ENCODE measurements at regions of chr18 and their contacts with region 1.

Region 1: DNA sequence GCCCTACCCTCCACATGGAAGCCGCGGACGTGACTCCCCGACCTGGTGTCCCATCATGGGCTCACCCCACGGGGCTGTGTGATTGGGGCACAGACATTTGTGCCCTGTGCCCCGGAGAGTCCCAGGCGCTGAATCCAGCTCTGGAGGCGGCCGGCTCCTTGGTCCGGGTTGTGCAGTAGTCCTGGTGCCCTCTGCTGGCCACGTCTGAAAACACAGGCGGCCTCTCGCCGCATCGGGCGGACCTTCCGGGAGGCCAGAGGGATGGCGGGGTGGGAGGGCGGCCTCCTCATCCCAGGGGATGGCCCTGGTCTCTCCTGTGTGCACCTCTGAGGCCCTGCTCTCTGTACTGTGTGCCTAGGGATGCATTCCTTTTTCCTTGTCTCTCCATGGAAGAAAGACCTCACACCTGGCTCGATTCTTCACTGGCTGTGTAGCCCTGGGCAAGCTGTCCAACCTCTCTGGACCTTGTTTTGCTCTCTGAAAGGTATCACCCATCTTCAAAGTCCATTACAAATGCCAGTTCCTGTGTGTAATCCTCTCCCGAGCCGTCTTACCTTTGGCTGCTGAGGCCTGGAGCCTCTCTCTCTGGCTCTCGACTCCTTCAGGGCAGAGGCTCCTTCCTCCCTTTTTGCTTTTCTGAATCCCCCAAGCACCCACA is 27.6 kb downstream of the CELF4 start:
- DNase-seq: peak; percentile 63
- H3K4me3 Mint-ChIP-seq: no peak overlapping the region
- H3K27ac Mint-ChIP-seq: no peak overlapping the region
- H3K4me1 Mint-ChIP-seq: peaks cover 11% of the 10 kb centered on the region
- H3K27me3 Mint-ChIP-seq: peaks cover 72% of the 10 kb centered on the region
- CTCF ChIP-seq: peak; percentile 92

Region 2: GRCh38 chr18:36942264-36942663 is 595.7 kb before region 1 on chr18:
- CTCF ChIA-PET with region 1: interaction called, 4 read pairs
- POLR2A ChIA-PET with region 1: no interaction called
- intact Hi-C with region 1: loop called (anchors 1 kb)
- DNase-seq: peak; percentile 54
- H3K4me3 Mint-ChIP-seq: no peak overlapping the region
- H3K27ac Mint-ChIP-seq: no peak overlapping the region
- H3K4me1 Mint-ChIP-seq: no peaks in the 10 kb centered on the region
- H3K27me3 Mint-ChIP-seq: no peaks in the 10 kb centered on the region
- CTCF ChIP-seq: peak; percentile 83

Region 3: DNA sequence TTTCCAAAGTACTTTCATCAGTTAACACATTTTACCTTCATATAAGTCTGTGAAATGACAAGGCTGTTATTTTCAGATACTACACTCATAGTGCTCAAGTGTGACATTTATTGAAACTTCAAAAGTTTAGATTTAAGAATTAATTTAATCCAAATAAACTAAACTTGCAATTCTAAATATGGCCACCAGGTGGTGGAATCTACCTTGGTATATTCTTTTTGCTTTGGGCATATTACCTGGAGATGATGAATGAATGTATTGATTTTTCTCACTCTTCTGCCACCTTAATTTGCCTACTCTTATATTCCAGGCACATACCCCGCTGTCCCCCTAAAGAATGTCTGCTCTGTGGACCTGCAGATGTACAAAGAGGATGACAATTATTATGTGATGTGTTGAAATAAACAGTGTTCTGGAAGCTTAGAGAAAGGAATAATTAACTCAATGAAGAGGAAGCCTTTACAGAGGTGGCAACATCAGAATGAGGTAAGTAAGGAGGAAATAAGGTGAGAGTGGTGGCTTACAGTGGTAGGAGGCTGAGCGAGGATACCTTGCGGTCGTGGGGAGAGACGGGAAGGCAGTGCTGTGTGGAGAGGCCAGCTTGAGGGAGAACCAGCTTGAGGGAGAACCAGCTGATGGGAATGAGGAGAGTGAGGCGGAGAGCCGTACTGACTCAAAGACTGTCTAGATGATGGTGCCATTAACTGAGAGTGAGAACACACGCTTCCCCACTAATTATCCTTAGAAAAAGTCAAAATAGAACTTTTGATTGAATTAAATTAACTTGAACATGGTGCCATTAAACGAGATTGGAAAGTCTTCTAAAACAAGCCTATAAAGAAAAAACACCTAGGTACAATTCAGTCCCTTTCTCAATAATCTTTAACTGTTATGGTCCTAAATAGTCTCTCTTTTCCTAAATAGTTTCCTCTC is 151.9 kb before region 1 on chr18:
- CTCF ChIA-PET with region 1: interaction called, 76 read pairs
- POLR2A ChIA-PET with region 1: no interaction called
- intact Hi-C with region 1: loop called (anchors 1 kb)
- DNase-seq: peak; percentile 54
- H3K4me3 Mint-ChIP-seq: no peak overlapping the region
- H3K27ac Mint-ChIP-seq: no peak overlapping the region
- H3K4me1 Mint-ChIP-seq: no peaks in the 10 kb centered on the region
- H3K27me3 Mint-ChIP-seq: peaks cover 15% of the 10 kb centered on the region
- CTCF ChIP-seq: peak; percentile 53

Region 4: DNA sequence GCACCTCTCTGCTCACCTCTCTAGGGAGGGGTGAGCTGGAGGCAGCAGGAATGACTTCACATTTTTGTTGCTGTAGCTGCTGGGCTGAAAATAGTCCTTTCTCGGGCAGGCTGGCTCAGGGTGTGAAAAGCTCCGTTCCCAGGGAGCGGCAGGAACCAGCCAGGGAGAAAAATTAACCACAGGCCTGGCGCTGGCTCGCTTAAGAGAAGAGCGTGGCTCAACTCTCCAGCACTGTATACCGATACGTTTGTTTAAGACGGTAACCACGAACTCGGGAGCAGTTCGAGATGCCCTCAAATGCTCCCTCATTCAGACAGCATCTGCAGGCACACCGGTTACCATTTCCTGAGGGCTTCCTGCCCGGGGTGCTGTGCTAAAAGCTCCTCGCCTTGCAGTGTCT is 102.0 kb before region 1 on chr18:
- CTCF ChIA-PET with region 1: interaction called, 12 read pairs
- POLR2A ChIA-PET with region 1: no interaction called
- intact Hi-C with region 1: no loop called
- DNase-seq: no peak
- H3K4me3 Mint-ChIP-seq: no peak overlapping the region
- H3K27ac Mint-ChIP-seq: no peak overlapping the region
- H3K4me1 Mint-ChIP-seq: no peaks in the 10 kb centered on the region
- H3K27me3 Mint-ChIP-seq: no peaks in the 10 kb centered on the region
- CTCF ChIP-seq: no peak

Region 5: DNA sequence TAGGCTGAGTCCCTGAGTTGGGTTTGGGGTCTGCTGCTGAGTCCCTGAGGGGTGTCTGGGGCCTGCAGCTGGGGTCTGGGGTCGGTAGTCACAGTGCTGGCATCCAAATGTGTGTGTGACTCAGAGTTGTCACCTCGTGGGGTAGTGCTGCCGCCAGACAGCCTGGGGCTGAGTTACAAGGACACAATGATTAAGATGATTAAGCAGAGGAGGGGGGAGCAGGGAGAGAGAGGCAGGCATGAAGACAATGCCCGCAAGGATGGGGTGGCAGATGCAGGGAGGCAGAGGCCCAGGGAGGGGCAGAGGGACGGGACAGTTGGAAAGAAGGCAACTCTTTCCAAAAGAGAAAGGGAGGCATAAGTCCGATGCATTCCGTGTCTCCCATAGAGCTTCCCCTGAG is 92.6 kb before region 1 on chr18:
- CTCF ChIA-PET with region 1: interaction called, 34 read pairs
- POLR2A ChIA-PET with region 1: no interaction called
- intact Hi-C with region 1: loop called (anchors 1 kb)
- DNase-seq: no peak
- H3K4me3 Mint-ChIP-seq: no peak overlapping the region
- H3K27ac Mint-ChIP-seq: no peak overlapping the region
- H3K4me1 Mint-ChIP-seq: peaks cover 7% of the 10 kb centered on the region
- H3K27me3 Mint-ChIP-seq: no peaks in the 10 kb centered on the region
- CTCF ChIP-seq: no peak

Region 6: GRCh38 chr18:37578886-37579513 is 41.0 kb after region 1 on chr18:
- CTCF ChIA-PET with region 1: no interaction called
- POLR2A ChIA-PET with region 1: no interaction called
- intact Hi-C with region 1: no loop called
- DNase-seq: peak; percentile 53
- H3K4me3 Mint-ChIP-seq: no peak overlapping the region
- H3K27ac Mint-ChIP-seq: no peak overlapping the region
- H3K4me1 Mint-ChIP-seq: peaks cover 18% of the 10 kb centered on the region
- H3K27me3 Mint-ChIP-seq: peaks cover 27% of the 10 kb centered on the region
- CTCF ChIP-seq: no peak

Region 7: DNA sequence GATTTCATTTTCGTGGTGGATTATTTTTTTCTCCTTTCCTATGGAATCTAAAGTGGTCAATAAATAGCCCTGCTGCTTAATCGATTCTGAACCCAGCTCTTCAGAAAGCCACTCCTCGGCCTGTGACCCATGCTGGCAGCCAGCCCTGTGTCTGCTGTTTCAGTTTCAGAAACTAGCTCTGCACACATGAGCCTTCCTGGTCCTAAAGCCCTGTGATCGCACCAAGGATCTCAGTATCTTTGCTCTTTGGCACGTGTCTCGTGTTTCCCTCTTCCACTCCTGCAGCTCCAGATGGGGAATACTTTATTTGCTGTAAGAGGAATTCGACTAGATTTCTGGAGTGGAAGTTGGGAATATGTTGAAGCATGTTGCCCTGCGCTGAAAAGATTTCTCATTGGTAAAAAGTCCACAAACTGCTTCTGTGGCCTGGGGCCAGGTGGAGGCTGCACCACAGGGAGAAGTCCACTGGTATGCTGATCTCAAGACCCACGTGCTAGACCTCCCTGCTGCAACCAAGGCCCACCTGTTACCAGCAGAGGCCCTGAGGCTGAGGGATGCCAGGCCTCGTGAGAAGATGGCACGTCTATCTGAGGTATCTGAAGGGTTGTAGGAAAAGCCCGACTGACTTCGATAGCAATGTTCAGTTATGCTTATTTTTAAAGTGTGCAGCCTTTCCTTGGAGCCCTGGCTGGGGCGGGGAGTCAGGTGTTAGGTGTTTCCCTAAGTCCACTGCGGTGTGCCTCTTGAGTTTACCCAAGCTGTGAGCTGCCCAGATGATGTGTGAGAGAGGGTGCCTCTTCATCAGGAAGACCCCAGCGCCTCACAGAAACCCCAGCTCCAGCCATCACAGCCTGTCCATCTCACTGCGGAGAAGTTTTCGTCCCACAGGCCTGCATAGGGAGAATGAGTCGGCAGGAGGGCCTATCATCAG is 61.2 kb after region 1 on chr18:
- CTCF ChIA-PET with region 1: no interaction called
- POLR2A ChIA-PET with region 1: no interaction called
- intact Hi-C with region 1: no loop called
- DNase-seq: no peak
- H3K4me3 Mint-ChIP-seq: no peak overlapping the region
- H3K27ac Mint-ChIP-seq: no peak overlapping the region
- H3K4me1 Mint-ChIP-seq: no peaks in the 10 kb centered on the region
- H3K27me3 Mint-ChIP-seq: no peaks in the 10 kb centered on the region
- CTCF ChIP-seq: no peak